ENCODE measurements at regions of chrX and their contacts with region 1.

Region 1: GRCh38 chrX:47217642-47218279 is 720 bp upstream of the CDK16 start:
- H3K4me3 ChIP-seq: peak overlapping the region; percentile 87
- H3K27ac ChIP-seq: peak overlapping the region; percentile 99
- H3K4me1 ChIP-seq: peaks cover 11% of the 10 kb centered on the region; the same call in 1 of the 2 replicates
- CTCF ChIP-seq: no peak

Region 2: GRCh38 chrX:47093248-47093647 is 124.5 kb before region 1 on chrX:
- CTCF ChIA-PET with region 1: no interaction called
- POLR2A ChIA-PET with region 1: no interaction called
- H3K4me3 ChIP-seq: no peak overlapping the region
- H3K27ac ChIP-seq: no peak overlapping the region
- H3K4me1 ChIP-seq: 0 out of 2 replicates have a peak, but pooled peaks cover 2% of the 10 kb centered on the region
- CTCF ChIP-seq: no peak

Region 3: DNA sequence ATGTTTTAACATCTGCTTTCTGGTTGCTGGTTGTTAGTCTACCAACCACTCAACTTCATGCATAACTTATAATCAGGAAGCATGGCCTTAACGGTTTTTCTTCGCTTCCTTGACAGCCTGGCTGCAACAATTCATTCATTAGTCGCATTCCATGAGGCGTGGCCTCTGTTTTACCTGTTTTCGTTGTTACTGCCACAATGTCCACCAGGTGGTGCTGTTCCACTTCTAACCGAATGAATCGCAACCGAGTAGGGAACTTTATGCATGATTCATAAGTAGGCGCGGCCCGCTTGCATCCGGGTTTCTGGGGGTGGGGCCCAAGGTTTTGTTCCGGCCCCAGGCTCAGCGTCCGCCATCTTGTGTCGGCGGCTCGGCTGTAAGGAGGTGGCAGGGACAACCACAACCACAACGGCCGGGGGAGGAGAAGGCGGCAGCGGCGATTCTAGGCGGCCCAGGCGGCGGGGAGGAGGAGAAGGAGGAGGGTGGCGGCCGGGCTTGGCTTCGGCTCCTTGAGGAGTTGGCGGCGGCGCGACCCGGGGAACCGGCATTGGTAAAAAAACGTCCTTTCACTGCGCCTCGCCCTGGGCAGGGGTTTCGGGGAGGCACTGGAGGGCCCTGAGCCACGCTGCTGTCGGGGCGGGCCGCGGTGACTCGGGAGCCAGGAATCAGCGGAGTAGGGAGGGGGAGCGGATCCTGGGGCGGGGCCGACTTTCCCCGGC is 24.1 kb before region 1 on chrX and contains the start of gene UBA1:
- CTCF ChIA-PET with region 1: no interaction called
- POLR2A ChIA-PET with region 1: interaction called, 20 read pairs
- H3K4me3 ChIP-seq: peak within 1 kb of the TSS; percentile 97
- H3K27ac ChIP-seq: peak within 1 kb of the TSS; percentile 90
- H3K4me1 ChIP-seq: peaks cover 10% of the 10 kb centered on the region; the same call in 1 of the 2 replicates
- CTCF ChIP-seq: peak; percentile 80

Region 4: DNA sequence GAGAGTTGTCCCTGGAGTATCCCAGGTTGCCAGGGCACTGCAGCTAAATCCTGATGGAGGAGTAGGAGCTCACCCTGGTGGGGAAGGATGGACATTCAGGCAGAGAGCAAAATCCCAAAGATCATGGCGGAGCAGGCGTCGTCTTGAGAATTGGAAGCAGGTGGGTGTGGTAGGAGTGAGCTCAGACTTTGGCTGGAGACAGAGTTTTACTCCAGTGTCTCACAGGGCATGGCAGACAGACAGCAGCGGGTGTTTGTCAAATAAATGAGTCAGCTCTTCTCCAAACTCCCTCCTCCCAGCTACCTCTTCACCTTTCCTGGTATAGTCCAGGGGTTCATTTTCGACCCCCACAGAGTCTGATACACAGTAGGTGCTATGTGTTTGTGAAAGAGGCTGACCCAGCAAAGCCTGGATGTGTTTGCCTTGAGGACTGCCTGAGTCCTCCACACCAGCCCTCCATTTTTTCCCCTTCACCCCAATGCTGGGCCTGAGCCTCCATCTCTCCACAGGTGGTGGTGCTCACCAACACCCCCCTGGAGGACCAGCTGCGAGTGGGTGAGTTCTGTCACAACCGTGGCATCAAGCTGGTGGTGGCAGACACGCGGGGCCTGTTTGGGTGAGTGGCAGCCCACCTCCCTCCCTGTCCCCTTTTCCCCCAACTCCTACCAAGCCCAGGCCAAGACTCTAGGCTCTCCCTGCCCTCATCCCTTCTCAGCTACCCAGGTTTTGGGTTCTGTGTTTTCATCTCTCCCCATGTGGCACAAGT is 17.2 kb before region 1 on chrX:
- CTCF ChIA-PET with region 1: no interaction called
- POLR2A ChIA-PET with region 1: interaction called, 20 read pairs
- H3K4me3 ChIP-seq: no peak overlapping the region
- H3K27ac ChIP-seq: no peak overlapping the region
- H3K4me1 ChIP-seq: 0 out of 2 replicates have a peak, but pooled peaks cover 4% of the 10 kb centered on the region
- CTCF ChIP-seq: no peak

Region 5: DNA sequence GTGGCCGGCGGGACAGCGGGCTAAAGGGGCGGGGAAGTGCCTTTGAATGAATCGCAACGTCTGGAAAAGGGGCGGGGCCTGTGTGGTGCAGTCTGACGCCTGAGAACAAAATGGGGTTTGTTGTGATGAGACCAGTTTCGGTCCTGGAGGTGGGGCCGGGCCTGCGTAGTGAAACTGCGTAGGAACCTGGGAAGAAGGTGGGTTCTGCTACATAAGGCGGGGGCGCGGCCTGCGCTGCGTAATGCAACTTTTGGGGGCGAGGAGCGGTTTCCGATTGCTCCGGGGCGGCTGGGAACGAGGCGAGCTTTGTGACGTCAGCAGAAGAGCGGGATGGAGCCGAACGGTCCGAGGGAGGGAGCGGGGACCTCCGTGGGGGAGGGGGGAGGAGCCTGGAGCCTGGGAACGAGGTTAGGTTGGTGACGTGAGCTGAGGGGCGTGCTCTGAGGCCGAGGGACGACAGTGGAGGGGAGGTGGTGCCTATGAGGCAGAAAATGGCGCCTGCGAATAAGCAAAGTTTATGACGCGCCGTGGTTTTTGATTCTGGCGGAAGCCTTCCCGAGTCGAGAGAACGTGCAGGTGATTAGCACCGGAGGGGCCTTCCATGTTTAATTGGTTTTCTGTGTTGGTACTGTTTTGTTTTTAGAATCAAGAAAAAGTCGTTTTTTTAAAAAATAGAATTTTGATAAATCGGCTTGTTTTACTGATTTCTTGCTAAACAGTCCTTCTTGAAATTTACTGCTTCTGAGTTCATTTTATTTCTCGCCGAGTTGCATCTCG is 15.8 kb after region 1 on chrX:
- CTCF ChIA-PET with region 1: no interaction called
- POLR2A ChIA-PET with region 1: interaction called, 124 read pairs
- H3K4me3 ChIP-seq: peak overlapping the region; percentile 87
- H3K27ac ChIP-seq: peak overlapping the region; percentile 100
- H3K4me1 ChIP-seq: peaks cover 7% of the 10 kb centered on the region; the same call in 1 of the 2 replicates
- CTCF ChIP-seq: no peak